Activated T-helper 2 cell treated with anti-CD3 and anti-CD28 coated beads, Interferon-gamma antibody, Interleukin-2, Interleukin-4, amounts not matched to agents 10 μg/mL and 5 μg/mL and 100 μg/mL, durations not matched to agents 14 hours and 24 hours and 36 hours (primary cell): ENCODE measurements at regions of chr6 and their contacts with region 1.

Region 1: GRCh38 chr6:11414176-11414963 is 123.2 kb upstream of the TMEM170B start:
- DNase-seq: peak; percentile 24
- H3K4me3 Mint-ChIP-seq: no peak overlapping the region
- H3K27ac Mint-ChIP-seq: no peak overlapping the region
- H3K4me1 Mint-ChIP-seq: peaks cover 62% of the 10 kb centered on the region
- H3K27me3 Mint-ChIP-seq: no peaks in the 10 kb centered on the region

Region 2: DNA sequence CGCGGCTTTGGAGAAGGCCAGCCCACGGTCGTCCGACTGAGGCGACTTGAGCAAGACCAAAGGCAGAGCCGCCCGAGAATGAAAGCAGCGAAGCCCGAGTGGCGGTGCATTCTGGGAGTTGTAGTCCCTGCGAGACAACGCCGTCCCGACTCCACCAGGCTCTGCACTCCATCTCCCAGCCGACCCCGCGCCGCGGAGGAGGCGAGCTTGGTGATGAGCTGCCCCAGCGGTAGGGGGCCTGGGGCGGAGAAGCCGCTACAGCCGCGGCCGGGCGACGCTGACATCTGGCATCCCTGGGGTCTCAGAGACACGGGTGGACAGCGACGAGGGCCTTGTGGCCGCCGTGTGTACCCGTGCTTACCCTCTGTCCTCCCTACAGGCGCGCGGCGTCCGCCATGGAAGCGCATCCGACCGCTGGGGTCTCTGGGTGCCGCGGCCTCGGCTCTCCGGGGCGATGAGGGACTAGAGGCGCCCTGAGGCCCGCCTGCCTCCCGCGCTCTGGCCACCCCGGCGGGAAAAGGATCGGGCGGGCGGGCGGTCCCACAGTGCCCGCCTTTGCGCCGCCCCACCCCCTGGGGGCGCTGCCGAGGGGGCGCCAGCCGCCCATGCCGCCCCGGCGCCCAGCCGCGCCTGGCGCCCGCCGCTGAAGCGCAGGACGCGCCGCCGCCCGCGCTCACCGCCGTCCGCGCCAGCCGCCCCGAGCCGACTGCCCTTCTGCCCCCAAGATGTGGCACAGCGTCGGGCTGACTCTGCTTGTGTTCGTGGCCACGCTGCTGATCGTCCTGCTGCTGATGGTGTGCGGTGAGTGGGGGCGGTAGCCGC is 320.6 kb before region 1 on chr6 and contains the start of gene SMIM13:
- intact Hi-C with region 1: loop called (anchors 5 kb)
- DNase-seq: peak; percentile 92
- H3K4me3 Mint-ChIP-seq: peak within 1 kb of the TSS; percentile 96
- H3K27ac Mint-ChIP-seq: peak within 1 kb of the TSS; percentile 98
- H3K4me1 Mint-ChIP-seq: peaks cover 22% of the 10 kb centered on the region
- H3K27me3 Mint-ChIP-seq: peaks cover 2% of the 10 kb centered on the region
- total RNA-seq, gene SMIM13: 12.2 and 12.3 TPM in 2 replicates

Region 3: DNA sequence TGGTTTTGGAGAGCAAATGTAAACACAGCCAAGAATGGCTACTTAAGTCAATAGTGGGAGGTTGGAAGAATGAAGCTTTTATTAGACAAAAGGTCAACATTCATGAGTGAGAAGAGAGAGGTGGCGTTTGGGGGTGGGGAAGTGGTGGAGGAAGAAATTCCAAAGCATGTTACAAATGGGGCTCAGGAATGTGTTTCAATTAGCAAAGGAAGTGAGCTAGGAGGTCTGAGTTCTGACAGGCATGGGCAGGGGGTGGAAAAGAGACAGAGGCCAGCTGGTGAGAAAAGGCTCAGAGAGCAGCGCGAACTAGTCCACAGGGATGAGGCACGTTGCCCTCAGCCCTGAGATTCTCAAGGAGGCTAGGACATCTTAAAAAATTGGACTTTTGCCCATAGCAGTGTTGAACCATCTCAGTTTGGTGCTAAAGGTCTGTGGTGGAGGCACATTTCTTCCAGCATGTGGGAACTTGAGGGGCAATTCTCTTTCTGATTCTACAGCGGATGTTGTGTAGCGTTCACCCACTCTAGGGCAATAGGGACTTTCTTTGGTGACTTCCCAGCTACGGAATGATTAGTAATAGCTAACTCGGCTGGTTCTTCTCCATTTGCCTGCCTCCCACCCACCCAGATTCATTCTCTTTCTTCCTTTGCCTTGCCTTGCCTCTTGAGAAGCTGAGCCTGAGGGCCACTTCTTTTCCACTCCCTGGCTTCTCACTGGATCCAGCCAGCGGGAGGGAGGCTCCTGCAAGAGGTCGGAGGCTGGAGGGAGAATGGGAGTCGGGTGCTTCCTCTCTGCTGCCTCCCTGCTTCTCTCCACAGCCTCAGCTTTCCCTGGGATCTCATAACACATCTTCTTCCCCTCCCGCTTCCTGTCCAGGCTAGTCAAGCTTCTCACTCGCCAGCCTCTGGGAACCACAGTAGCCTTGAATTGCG is 136.8 kb before region 1 on chr6:
- intact Hi-C with region 1: loop called (anchors 5 kb)
- DNase-seq: no peak
- H3K4me3 Mint-ChIP-seq: no peak overlapping the region
- H3K27ac Mint-ChIP-seq: peak overlapping the region; percentile 95
- H3K4me1 Mint-ChIP-seq: peaks cover 38% of the 10 kb centered on the region
- H3K27me3 Mint-ChIP-seq: no peaks in the 10 kb centered on the region

Region 4: GRCh38 chr6:11374036-11375010 is 40.0 kb before region 1 on chr6:
- intact Hi-C with region 1: loop called (anchors 1 kb)
- DNase-seq: no peak
- H3K4me3 Mint-ChIP-seq: peak overlapping the region; percentile 28
- H3K27ac Mint-ChIP-seq: peak overlapping the region; percentile 86
- H3K4me1 Mint-ChIP-seq: peaks cover 58% of the 10 kb centered on the region
- H3K27me3 Mint-ChIP-seq: no peaks in the 10 kb centered on the region

Region 5: DNA sequence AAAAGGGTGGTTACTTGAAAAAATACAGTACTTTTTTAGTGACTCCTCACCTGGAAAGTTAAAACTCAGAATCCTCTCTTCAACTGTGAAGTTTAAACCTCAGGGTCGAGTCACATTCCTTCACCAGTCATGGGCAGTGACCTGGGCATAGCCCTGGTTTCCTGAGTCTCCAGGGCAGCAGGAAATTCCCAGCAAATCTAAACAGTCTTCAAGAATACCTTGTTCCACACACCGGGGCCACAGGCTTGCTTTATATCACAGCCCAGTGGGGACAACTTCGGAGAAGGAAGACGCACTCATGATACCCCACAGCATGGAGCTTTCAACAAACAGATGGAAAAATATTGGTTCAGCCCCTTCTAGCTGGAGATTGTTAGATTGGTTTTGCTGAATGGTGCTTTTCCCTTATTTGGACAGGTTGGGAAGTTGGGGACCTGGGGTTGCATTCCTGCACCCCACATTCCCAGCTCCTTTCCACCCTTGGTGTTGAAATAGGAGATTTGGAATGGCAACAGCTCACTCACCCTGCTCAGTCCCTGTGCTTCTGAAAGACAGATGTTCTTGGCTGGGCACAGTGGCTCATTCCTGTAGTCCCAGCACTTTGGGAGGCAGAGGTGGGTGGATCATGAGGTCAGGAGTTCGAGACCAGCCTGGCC is 10.2 kb after region 1 on chr6:
- intact Hi-C with region 1: loop called (anchors 1 kb)
- DNase-seq: no peak
- H3K4me3 Mint-ChIP-seq: no peak overlapping the region
- H3K27ac Mint-ChIP-seq: peak overlapping the region; percentile 43
- H3K4me1 Mint-ChIP-seq: peaks cover 53% of the 10 kb centered on the region
- H3K27me3 Mint-ChIP-seq: no peaks in the 10 kb centered on the region